SK-N-SH (cell line): ENCODE measurements at regions of chr10 and their contacts with region 1.

Region 1: DNA sequence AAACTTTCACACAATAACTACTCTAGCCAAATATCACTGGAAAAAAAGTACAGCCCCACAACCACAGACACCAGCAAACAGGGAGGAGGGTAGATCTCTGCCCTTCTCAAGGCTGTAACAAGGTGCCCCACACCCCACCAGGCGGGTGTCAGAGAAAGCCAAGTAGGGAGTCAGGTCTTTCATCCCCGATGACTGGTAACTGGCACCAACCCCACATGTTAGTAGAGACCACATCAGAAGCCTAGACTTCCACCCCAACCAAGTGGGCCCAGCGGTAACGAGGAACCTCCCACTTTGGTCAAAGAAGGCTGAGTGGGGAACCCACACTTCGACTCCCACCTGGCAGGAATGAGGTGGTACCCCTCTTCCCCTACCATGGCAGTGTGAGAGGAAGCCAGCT is 16.4 kb upstream of the RUFY2 start:
- DNase-seq: no peak
- H3K4me3 ChIP-seq: no peak overlapping the region
- H3K27ac ChIP-seq: no peak overlapping the region
- H3K4me1 ChIP-seq: no peaks in the 10 kb centered on the region
- H3K27me3 ChIP-seq: no peaks in the 10 kb centered on the region
- CTCF ChIP-seq: no peak
- EP300 ChIP-seq: no peak
- RAD21 ChIP-seq: no peak

Region 2: DNA sequence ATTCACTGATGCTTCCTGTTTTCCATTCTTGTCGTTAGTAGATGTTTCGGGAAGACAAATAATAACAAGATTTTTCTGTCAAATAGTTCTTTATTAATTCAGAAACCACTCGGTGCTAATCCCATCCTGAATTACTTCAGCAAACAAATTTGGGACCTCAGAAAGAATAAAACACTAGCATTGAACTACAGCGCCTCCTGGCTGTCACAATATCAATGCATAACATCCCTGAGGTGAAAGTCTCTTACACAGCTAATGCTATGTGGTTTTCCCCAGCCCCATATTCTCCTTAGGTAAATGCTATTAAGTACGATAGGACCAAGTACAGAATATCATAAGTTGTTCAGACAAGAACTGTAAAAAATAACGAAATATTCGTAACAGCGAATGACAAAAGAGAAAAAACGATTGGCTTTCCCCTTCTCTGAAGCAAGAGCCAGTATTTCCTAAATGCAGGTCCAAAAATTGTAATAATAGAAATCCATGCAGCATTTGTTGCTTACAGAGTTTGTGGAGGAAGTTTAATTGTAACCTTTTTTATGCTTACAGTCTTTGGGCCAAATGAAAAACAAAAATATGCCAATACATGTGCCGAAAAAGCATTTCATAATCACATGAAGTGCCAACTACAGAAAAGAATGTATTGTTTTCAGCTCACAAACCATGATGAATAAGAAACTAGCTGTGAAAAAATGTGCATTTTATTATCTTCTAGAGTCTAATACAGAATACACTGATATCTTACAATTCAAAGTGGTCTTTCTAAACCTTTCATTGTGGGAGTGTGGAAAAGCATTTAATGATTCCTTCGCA is 266.9 kb before region 1 on chr10:
- CTCF ChIA-PET with region 1: no interaction called
- POLR2A ChIA-PET with region 1: no interaction called
- DNase-seq: peak; percentile 35
- H3K4me3 ChIP-seq: no peak overlapping the region; a peak in 1 of 4 replicates
- H3K27ac ChIP-seq: no peak overlapping the region
- H3K4me1 ChIP-seq: peaks cover 11 to 27% of the 10 kb centered on the region in 2 experiments; a peak in 3 of 4 replicates
- H3K27me3 ChIP-seq: no peaks in the 10 kb centered on the region
- CTCF ChIP-seq: peak; percentile 93
- EP300 ChIP-seq: no peak
- RAD21 ChIP-seq: peak; percentile 86

Region 3: DNA sequence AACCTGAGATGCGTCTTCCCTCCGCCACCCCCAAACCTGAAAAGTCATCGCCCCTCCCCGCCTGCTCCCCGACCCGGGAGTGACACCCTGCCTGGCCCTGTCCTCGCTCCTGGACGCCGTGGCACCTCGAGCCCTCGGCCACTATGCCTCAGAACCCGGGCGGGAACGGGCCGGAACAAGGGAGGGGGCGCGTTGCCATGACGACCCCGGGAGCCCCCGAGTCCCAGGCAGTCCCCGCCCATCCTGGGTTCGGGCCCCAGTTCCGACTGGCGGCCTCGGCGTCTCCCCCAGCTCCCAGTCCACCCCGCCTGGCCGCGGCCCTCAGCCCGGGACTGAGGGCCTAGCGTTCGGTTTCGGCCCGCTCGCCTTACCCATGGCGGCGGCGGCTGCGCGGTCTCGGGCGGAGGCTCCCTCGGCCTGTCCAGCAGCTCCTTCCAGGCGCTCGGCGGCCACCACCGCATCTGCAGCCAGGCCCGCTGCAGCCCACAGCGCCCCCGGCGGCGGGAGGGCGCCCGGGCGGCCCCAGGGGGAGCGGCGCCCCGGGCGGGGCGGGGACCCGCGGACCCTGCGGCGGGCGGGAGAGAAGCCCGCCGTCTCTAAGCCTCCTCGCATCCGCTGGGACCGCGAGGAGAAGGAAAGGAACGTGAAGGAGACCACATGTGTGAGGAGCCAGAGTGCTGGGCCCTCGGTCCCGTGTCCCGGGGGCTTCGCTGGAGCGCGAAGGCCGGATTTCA is 16.5 kb before region 1 on chr10 and contains the start of gene RUFY2:
- CTCF ChIA-PET with region 1: interaction called, 10 read pairs
- POLR2A ChIA-PET with region 1: no interaction called
- DNase-seq: peak; percentile 96
- H3K4me3 ChIP-seq: peak within 1 kb of the TSS; percentile 79 to 94
- H3K27ac ChIP-seq: peak within 1 kb of the TSS; percentile 88 to 89
- H3K4me1 ChIP-seq: peaks cover 0 to 5% of the 10 kb centered on the region in 2 experiments; a peak in 2 of 4 replicates
- H3K27me3 ChIP-seq: no peaks in the 10 kb centered on the region
- CTCF ChIP-seq: peak; percentile 33; the same call in 1 of the 2 replicates
- EP300 ChIP-seq: no peak
- RAD21 ChIP-seq: no peak
- polyA plus RNA-seq, gene RUFY2: 6.2 and 9.0 TPM in 2 replicates

Region 4: DNA sequence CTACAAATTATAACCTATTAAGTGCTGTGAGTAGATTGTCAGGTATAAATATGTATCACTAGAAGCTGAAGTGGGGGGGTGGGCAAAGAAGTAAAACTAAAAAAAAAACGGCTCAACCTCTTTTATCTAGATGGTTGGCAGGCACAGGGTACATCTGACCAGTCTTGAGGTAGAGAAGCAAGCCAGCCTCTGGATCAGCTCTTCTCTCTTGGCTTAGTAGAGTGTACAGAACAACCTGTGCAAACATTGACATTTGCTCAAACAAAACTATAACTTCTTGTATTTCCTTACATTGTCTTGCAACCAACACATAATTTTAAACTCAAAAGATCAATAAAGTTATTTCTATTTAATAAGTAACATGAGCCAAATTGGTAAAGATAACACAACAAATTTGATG is 22.7 kb after region 1 on chr10:
- CTCF ChIA-PET with region 1: no interaction called
- POLR2A ChIA-PET with region 1: no interaction called
- DNase-seq: no peak
- H3K4me3 ChIP-seq: no peak overlapping the region
- H3K27ac ChIP-seq: no peak overlapping the region
- H3K4me1 ChIP-seq: no peaks in the 10 kb centered on the region
- H3K27me3 ChIP-seq: no peaks in the 10 kb centered on the region
- CTCF ChIP-seq: no peak
- EP300 ChIP-seq: no peak
- RAD21 ChIP-seq: no peak